ENCODE measurements at regions of chr12 and their contacts with region 1.

Region 1: DNA sequence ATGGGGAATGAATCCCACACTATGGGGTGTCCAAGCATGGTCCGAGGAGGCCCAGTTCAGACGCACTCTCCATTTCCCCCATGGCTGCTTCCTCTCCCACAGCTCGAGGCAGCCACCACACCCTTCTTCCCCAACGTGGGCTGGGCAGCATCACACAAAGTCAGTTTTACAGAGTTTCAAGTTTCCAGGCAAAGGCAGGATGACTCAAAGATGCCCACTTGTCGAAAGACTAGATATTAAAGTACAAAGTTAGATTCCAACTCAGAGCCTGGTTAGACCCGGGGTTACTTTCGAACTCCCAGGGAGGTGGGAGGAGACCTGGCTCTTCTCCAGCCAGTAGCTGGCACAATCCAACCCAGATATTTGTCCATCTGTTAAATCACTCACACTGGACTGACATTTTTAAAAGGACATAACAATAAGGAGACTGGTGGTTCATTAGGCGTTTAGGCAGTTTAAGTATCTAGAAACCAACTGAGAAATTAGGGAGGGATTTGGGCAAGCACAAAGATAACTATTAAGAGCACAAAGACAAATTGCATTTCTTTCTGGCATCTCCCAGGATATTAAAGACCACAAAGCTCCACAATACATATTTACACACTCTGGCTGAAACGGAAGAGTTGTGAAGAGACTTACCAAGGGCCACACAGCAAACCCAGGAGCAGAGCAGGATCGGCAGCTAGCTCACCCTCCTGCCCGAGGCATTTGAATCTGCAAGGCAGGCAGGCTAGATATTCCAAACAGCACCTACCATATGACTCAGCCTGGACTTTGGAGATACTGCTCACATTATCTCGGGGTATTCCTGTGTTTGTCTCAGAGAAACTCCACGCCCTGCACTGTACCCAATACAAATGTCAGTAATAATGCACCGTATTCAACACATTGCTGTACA is 34.8 kb downstream of the TMCC3 start:
- DNase-seq: peak; percentile 69
- H3K4me3 ChIP-seq: peak overlapping the region in 1 of 3 experiments; percentile 10
- H3K27ac ChIP-seq: peak overlapping the region; percentile 38
- H3K4me1 ChIP-seq: peaks cover 36% of the 10 kb centered on the region
- H3K27me3 ChIP-seq: no peaks in the 10 kb centered on the region
- CTCF ChIP-seq: no peak
- POLR2A ChIP-seq: no peak

Region 2: GRCh38 chr12:94593822-94594442 is 21.6 kb before region 1 on chr12:
- CTCF ChIA-PET with region 1: interaction called, 4 read pairs
- POLR2A ChIA-PET with region 1: no interaction called
- dilution Hi-C with region 1: no loop called
- intact Hi-C with region 1: loop called (anchors 2 kb)
- DNase-seq: no peak
- H3K4me3 ChIP-seq: no peak overlapping the region
- H3K27ac ChIP-seq: peak overlapping the region; percentile 0
- H3K4me1 ChIP-seq: peaks cover 57% of the 10 kb centered on the region
- H3K27me3 ChIP-seq: no peaks in the 10 kb centered on the region
- CTCF ChIP-seq: no peak
- POLR2A ChIP-seq: no peak

Region 3: GRCh38 chr12:94603434-94604365 is 11.8 kb before region 1 on chr12:
- CTCF ChIA-PET with region 1: interaction called, 10 read pairs
- POLR2A ChIA-PET with region 1: no interaction called
- dilution Hi-C with region 1: no loop called
- intact Hi-C with region 1: no loop called
- DNase-seq: no peak
- H3K4me3 ChIP-seq: no peak overlapping the region
- H3K27ac ChIP-seq: no peak overlapping the region
- H3K4me1 ChIP-seq: no peaks in the 10 kb centered on the region
- H3K27me3 ChIP-seq: no peaks in the 10 kb centered on the region
- CTCF ChIP-seq: peak; percentile 44 to 51
- POLR2A ChIP-seq: no peak